Sigmoid colon (tissue), 7 donors: ENCODE measurements at regions of chr1 and their contacts with region 1.

Region 1: GRCh38 chr1:25239681-25240541 is 7.3 kb downstream of the RSRP1 start:
- DNase-seq: peak; percentile 97
- H3K4me3 ChIP-seq: peak overlapping the region; percentile 24 to 54 (median 50)
- H3K27ac ChIP-seq: peak overlapping the region; percentile 90 to 92 (median 90)
- H3K4me1 ChIP-seq: peaks cover 0 to 47% (median 28%) of the 10 kb centered on the region in 4 donors
- H3K27me3 ChIP-seq: no peaks in the 10 kb centered on the region
- CTCF ChIP-seq: peak in 3 of 4 experiments; percentile 33 to 52 (median 49)
- EP300 ChIP-seq: peak in 1 of 4 donors; percentile 24
- POLR2A ChIP-seq: peak in 1 of 2 donors; percentile 7

Region 2: DNA sequence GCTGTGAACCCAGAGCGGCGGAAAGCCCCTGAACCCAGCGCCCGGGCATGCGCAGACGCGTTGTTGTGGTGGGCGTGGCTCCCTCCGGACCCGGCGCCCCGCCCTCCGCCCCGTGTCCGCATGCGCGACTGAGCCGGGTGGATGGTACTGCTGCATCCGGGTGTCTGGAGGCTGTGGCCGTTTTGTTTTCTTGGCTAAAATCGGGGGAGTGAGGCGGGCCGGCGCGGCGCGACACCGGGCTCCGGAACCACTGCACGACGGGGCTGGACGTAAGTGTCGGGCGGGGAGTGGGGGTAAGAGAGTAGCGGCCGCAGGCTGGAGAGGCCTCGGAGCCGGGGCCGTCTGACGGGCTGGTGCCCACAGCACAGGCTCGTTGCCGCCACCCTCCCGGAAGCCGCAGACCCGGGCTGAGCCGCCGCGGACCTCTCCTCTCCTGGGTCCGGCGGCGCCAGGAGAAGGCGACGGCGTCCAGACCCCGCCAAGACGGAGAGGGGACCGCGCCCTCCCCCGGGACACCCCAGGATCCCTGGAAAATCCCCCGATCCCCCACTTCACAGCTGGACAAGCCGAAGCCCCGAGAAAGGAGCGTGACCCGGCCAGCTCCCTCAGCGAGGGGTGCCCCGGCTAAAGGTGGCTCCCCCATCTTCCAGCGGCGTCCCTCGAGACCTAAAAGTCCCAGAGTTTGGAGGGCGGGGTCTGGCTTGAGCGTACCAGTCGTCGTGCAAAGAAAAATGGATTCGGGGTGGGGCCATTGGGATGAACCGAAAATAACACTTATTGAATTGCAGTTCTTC is 98.5 kb after region 1 on chr1 and contains the start of gene TMEM50A:
- intact Hi-C with region 1: loop called (anchors 2 kb)
- DNase-seq: peak; percentile 95
- H3K4me3 ChIP-seq: peak within 1 kb of the TSS; percentile 80 to 96 (median 90)
- H3K27ac ChIP-seq: peak within 1 kb of the TSS; percentile 96 to 99 (median 98)
- H3K4me1 ChIP-seq: peaks cover 0 to 32% (median 28%) of the 10 kb centered on the region in 4 donors
- H3K27me3 ChIP-seq: no peaks in the 10 kb centered on the region
- CTCF ChIP-seq: no peak
- EP300 ChIP-seq: no peak
- POLR2A ChIP-seq: peak; percentile 61 to 88
- total RNA-seq, gene TMEM50A: 55.0 to 153 (median 112) TPM

Region 3: GRCh38 chr1:25430666-25431505 is 191.0 kb after region 1 on chr1 and contains the start of gene MACO1:
- intact Hi-C with region 1: loop called (anchors 5 kb)
- DNase-seq: peak; percentile 98
- H3K4me3 ChIP-seq: peak within 1 kb of the TSS; percentile 90 to 98 (median 96)
- H3K27ac ChIP-seq: peak within 1 kb of the TSS; percentile 97 to 98 (median 98)
- H3K4me1 ChIP-seq: peaks cover 0 to 51% (median 47%) of the 10 kb centered on the region in 4 donors
- H3K27me3 ChIP-seq: no peaks in the 10 kb centered on the region
- CTCF ChIP-seq: no peak
- EP300 ChIP-seq: no peak
- POLR2A ChIP-seq: peak in 1 of 2 donors; percentile 15
- total RNA-seq, gene MACO1: 11.8 to 20.2 (median 15.4) TPM

Region 4: DNA sequence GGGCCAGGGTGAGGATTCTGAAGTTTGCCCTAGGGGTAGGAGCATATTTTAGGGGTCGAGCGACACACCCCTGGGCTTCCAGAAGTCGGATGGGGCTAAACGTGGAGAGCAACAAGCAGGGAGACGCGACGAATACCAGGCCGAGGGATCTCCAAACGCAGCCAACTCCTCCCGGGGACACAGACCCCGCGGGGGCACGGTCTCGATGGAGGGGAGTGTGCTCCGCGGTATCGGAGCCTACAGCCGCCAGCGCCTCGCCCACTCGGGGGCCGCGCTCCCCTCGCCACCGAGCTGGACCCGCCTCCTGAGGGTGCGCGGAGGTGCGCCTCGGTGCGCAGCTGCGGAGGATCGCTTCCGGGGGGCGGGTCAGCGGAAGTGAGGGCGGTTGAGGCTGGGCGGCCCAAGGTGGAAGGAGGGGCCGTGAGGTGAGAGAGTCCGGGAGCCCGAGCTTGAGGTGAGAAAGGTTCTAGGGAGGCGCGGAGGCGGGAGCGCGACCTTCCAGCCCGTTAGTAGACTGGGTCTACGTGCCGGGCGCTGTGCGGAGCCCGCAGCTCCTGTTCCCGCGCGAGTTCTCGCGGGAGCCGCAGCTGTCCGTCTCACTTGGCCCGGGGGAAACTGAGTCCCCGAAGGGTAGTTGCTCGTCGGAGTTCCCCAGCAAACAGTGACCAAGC is 579.8 kb after region 1 on chr1 and contains the start of gene MTFR1L:
- intact Hi-C with region 1: loop called (anchors 10 kb)
- DNase-seq: peak; percentile 92
- H3K4me3 ChIP-seq: peak within 1 kb of the TSS; percentile 78 to 97 (median 92)
- H3K27ac ChIP-seq: peak within 1 kb of the TSS; percentile 90 to 96 (median 91)
- H3K4me1 ChIP-seq: peaks cover 2 to 35% (median 29%) of the 10 kb centered on the region in 4 donors
- H3K27me3 ChIP-seq: no peaks in the 10 kb centered on the region
- CTCF ChIP-seq: no peak
- EP300 ChIP-seq: peak in 1 of 4 donors; percentile 18
- POLR2A ChIP-seq: peak; percentile 81 to 95
- total RNA-seq, gene MTFR1L: 106 to 150 (median 121) TPM